WTC11 (cell line): ENCODE measurements at regions of chr2 and their contacts with region 1.

Region 1: DNA sequence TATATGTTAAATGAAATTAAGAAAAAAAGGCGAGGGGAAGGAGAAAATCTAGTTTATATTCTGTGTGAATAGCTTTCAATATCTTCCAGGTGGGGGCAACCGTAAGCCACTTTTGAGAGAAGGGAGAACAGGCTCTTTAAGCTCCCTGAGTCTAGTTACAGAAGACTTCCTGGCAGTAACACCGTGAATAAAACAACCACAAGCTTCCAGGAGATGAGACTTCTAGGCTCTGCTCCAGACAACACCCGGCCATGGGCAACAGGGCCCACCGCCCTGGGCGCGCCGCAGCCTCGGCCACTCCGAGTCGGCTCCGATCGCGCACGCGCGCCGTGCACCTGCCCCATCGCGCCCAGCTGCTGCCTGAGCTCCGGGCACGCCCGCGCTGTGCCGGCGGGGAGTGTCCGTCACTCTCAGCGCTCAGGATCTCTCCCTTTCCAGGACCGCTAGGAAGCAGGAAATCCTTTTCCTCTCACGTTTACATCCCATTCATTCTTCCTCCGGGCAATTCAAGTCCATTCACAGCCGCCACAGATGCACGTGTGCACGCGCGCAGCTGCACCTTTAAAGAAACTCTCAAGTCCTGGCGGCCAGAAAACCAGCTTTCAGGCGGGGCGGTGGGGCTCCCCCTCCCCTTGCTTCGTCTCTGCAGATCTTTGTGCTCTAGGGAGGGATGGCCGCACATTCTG is 19.4 kb upstream of the PAX3 start:
- DNase-seq: peak; percentile 83
- ATAC-seq: peak; percentile 74
- H3K4me3 Mint-ChIP-seq: peak overlapping the region; percentile 79
- H3K27ac Mint-ChIP-seq: no peak overlapping the region
- H3K4me1 Mint-ChIP-seq: peaks cover 11% of the 10 kb centered on the region
- H3K27me3 Mint-ChIP-seq: peaks cover 94% of the 10 kb centered on the region
- CTCF ChIP-seq: no peak

Region 2: GRCh38 chr2:222160944-222161343 is 157.2 kb before region 1 on chr2:
- CTCF ChIA-PET with region 1: no interaction called
- POLR2A ChIA-PET with region 1: no interaction called
- DNase-seq: no peak
- ATAC-seq: no peak
- H3K4me3 Mint-ChIP-seq: no peak overlapping the region
- H3K27ac Mint-ChIP-seq: no peak overlapping the region
- H3K4me1 Mint-ChIP-seq: peaks cover 33% of the 10 kb centered on the region
- H3K27me3 Mint-ChIP-seq: peaks cover 3% of the 10 kb centered on the region; the same call in 1 of the 2 replicates
- CTCF ChIP-seq: no peak

Region 3: DNA sequence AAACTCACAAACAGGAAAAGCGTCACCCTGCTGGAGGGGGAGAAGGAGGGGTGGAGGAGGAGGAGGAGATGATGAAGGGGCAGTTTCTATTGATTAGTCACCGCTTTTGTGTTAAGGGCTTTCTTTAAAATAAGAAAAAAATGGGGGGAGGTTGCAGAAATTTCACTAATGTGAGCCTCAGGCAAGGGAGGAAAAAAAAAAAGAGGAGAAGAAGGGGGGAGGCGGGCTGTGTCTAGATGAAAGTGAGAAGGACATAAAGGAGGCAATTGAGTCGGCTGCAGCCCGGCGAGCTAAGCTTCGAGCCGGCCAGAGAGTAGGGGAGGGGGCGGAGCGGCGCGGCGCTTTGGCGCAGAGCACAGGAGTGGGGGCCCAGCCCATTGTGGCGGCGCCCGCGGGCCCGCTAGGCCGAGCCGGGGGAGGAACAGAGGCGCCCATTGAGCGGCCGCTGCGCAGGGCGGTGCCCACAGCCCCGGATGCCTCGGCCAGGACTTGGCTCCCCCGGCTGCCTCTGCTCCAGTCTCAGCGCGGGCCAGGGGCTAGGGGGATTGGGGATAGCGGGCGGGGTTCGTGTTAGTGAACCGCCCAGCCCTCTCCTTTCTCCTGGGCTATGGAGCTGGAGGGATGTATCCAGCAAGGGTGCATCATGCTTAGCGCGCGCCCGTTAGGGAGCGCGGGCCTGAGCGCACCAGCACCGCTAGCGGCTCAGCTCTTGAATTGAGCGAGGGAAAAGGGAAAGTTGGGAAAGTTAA is 27.3 kb before region 1 on chr2:
- CTCF ChIA-PET with region 1: interaction called, 10 read pairs
- POLR2A ChIA-PET with region 1: interaction called, 4 read pairs
- DNase-seq: peak; percentile 90
- ATAC-seq: peak; percentile 88
- H3K4me3 Mint-ChIP-seq: peak overlapping the region; percentile 64
- H3K27ac Mint-ChIP-seq: no peak overlapping the region; the same call in 1 of the 2 replicates
- H3K4me1 Mint-ChIP-seq: peaks cover 60% of the 10 kb centered on the region
- H3K27me3 Mint-ChIP-seq: peaks cover 99% of the 10 kb centered on the region
- CTCF ChIP-seq: no peak

Region 4: GRCh38 chr2:222307143-222307756 is 10.9 kb before region 1 on chr2:
- CTCF ChIA-PET with region 1: interaction called, 12 read pairs
- POLR2A ChIA-PET with region 1: interaction called, 7 read pairs
- DNase-seq: no peak
- ATAC-seq: peak; percentile 41
- H3K4me3 Mint-ChIP-seq: peak overlapping the region; percentile 35
- H3K27ac Mint-ChIP-seq: no peak overlapping the region
- H3K4me1 Mint-ChIP-seq: peaks cover 71% of the 10 kb centered on the region
- H3K27me3 Mint-ChIP-seq: peaks cover 100% of the 10 kb centered on the region
- CTCF ChIP-seq: no peak

Region 5: GRCh38 chr2:222483513-222484039 is 165.4 kb after region 1 on chr2:
- CTCF ChIA-PET with region 1: interaction called, 10 read pairs
- POLR2A ChIA-PET with region 1: no interaction called
- DNase-seq: no peak
- ATAC-seq: no peak
- H3K4me3 Mint-ChIP-seq: no peak overlapping the region
- H3K27ac Mint-ChIP-seq: no peak overlapping the region
- H3K4me1 Mint-ChIP-seq: peaks cover 3% of the 10 kb centered on the region; the same call in 1 of the 2 replicates
- H3K27me3 Mint-ChIP-seq: peaks cover 98% of the 10 kb centered on the region
- CTCF ChIP-seq: no peak

Region 6: DNA sequence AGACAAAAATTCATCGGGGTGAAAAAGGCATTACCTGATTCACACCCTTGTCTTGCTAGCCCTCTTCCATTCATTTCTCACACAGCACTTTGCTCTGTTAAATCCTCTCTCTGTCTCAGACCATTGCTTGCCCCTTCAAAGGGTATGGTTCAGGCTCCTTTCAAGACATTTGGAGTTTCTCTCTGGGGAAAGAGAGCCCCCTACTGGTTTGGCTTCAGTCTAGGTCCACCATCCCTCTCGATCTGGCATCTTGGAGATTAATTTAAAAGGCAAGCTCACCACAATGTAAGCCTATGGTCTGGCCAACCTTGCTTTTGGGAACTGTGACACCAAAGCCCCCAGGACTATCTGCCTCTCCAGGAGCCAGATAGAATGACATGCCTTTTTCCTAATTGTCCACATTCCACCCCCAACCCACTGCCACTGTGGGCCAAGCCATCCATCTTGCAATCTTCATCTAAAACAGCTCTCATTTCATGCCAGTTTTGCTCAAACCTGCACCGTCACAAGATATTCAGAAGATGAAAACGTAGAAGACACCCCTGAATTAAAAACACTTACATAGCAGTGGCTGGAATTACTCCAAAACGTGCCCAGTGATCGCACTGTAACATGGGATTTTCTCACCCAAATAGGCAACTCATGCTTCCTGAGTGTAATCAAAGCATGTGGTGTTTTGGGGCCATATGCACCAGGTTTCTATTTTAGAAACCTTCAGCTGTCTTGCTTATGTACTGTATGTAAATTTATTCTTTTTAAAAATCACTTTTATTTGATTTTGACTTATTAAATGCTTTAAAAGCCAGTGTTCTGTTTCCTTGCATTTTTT is 243.9 kb after region 1 on chr2:
- CTCF ChIA-PET with region 1: interaction called, 37 read pairs
- POLR2A ChIA-PET with region 1: no interaction called
- DNase-seq: peak; percentile 56
- ATAC-seq: peak; percentile 93
- H3K4me3 Mint-ChIP-seq: no peak overlapping the region
- H3K27ac Mint-ChIP-seq: no peak overlapping the region
- H3K4me1 Mint-ChIP-seq: no peaks in the 10 kb centered on the region
- H3K27me3 Mint-ChIP-seq: peaks cover 15% of the 10 kb centered on the region
- CTCF ChIP-seq: peak; percentile 76